HepG2 (cell line): ENCODE measurements at regions of chr1 and their contacts with region 1.

Region 1: GRCh38 chr1:224052772-224053171 is 61.1 kb upstream of the FBXO28 start:
- DNase-seq: no peak
- ATAC-seq: no peak
- H3K4me3 ChIP-seq: no peak overlapping the region
- H3K27ac ChIP-seq: no peak overlapping the region
- H3K4me1 ChIP-seq: peaks cover 11% of the 10 kb centered on the region
- H3K27me3 ChIP-seq: no peaks in the 10 kb centered on the region; a peak in 1 of 5 replicates
- CTCF ChIP-seq: no peak
- EP300 ChIP-seq: no peak
- POLR2A ChIP-seq: no peak
- RAD21 ChIP-seq: no peak

Region 2: GRCh38 chr1:223695941-223696340 is 356.8 kb before region 1 on chr1:
- CTCF ChIA-PET with region 1: interaction called, 9 read pairs
- POLR2A ChIA-PET with region 1: no interaction called
- in situ Hi-C with region 1: loop called (anchors 5 kb)
- intact Hi-C with region 1: loop called (anchors 2 kb)
- DNase-seq: no peak
- ATAC-seq: no peak
- H3K4me3 ChIP-seq: no peak overlapping the region
- H3K27ac ChIP-seq: no peak overlapping the region
- H3K4me1 ChIP-seq: no peaks in the 10 kb centered on the region
- H3K27me3 ChIP-seq: peaks cover 0 to 17% of the 10 kb centered on the region in 2 experiments; a peak in 2 of 5 replicates
- CTCF ChIP-seq: no peak
- EP300 ChIP-seq: no peak
- POLR2A ChIP-seq: no peak
- RAD21 ChIP-seq: no peak

Region 3: DNA sequence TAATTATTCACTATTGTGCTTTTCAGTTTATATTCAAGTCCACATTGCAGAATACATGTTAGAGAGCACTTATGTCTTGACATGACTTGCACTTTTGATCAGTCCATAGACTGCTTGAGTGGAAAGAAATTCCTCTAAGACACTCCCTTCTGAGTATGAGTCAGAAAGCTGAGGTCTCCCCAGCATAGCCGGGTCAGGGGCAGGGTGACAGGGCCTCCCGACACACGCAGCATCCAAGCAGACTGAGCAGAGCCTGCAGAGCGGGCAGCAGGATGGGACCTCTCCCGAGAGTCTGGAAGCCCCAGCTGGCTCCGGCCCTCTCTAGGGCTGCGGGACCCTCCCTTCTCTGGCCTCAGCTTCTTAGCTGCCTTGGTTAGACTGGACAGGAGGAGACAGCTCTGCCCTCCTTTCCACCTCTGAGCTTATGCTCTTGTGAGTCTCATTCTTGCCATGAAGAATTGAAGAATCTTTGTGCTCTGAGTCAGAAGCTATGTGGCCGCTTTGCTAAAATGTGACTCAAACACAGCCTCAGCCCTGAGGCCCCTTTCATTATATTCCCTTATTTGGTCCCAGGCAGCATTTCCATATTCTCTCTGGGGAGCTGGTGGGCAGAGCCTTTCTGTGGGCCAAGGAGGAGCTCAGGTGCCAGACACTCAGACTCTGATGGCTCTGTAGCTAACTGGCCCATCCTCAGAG is 351.7 kb before region 1 on chr1:
- CTCF ChIA-PET with region 1: interaction called, 9 read pairs
- POLR2A ChIA-PET with region 1: no interaction called
- in situ Hi-C with region 1: loop called (anchors 5 kb)
- intact Hi-C with region 1: loop called (anchors 2 kb)
- DNase-seq: peak; percentile 32
- ATAC-seq: peak; percentile 23; the same call in 2 of the 3 replicates
- H3K4me3 ChIP-seq: no peak overlapping the region
- H3K27ac ChIP-seq: no peak overlapping the region
- H3K4me1 ChIP-seq: peaks cover 3% of the 10 kb centered on the region
- H3K27me3 ChIP-seq: peaks cover 0 to 57% of the 10 kb centered on the region in 2 experiments; a peak in 4 of 5 replicates
- CTCF ChIP-seq: no peak
- EP300 ChIP-seq: no peak
- POLR2A ChIP-seq: no peak
- RAD21 ChIP-seq: no peak

Region 4: GRCh38 chr1:224067621-224068457 is 15.1 kb after region 1 on chr1:
- CTCF ChIA-PET with region 1: no interaction called
- POLR2A ChIA-PET with region 1: no interaction called
- in situ Hi-C with region 1: no loop called
- intact Hi-C with region 1: no loop called
- DNase-seq: no peak
- ATAC-seq: no peak
- H3K4me3 ChIP-seq: no peak overlapping the region
- H3K27ac ChIP-seq: no peak overlapping the region
- H3K4me1 ChIP-seq: peaks cover 14% of the 10 kb centered on the region
- H3K27me3 ChIP-seq: no peaks in the 10 kb centered on the region; a peak in 2 of 5 replicates
- CTCF ChIP-seq: no peak
- EP300 ChIP-seq: no peak
- POLR2A ChIP-seq: no peak
- RAD21 ChIP-seq: no peak

Region 5: GRCh38 chr1:224329842-224330753 is 277.3 kb after region 1 on chr1 and contains the start of gene NVL:
- CTCF ChIA-PET with region 1: no interaction called
- POLR2A ChIA-PET with region 1: no interaction called
- in situ Hi-C with region 1: no loop called
- intact Hi-C with region 1: no loop called
- DNase-seq: peak; percentile 82
- ATAC-seq: peak; percentile 97
- H3K4me3 ChIP-seq: peak within 1 kb of the TSS; percentile 76 to 94 (median 81)
- H3K27ac ChIP-seq: peak within 1 kb of the TSS; percentile 93
- H3K4me1 ChIP-seq: peaks cover 15% of the 10 kb centered on the region
- H3K27me3 ChIP-seq: no peaks in the 10 kb centered on the region; a peak in 1 of 5 replicates
- CTCF ChIP-seq: no peak
- EP300 ChIP-seq: peak in 1 of 2 experiments; percentile 37; a peak in 1 of 4 replicates
- POLR2A ChIP-seq: peak; percentile 42 to 60
- RAD21 ChIP-seq: no peak
- total RNA-seq, gene NVL: 18.2 and 21.0 TPM in 2 replicates